ENCODE measurements at regions of chr1 and their contacts with region 1.

Region 1: DNA sequence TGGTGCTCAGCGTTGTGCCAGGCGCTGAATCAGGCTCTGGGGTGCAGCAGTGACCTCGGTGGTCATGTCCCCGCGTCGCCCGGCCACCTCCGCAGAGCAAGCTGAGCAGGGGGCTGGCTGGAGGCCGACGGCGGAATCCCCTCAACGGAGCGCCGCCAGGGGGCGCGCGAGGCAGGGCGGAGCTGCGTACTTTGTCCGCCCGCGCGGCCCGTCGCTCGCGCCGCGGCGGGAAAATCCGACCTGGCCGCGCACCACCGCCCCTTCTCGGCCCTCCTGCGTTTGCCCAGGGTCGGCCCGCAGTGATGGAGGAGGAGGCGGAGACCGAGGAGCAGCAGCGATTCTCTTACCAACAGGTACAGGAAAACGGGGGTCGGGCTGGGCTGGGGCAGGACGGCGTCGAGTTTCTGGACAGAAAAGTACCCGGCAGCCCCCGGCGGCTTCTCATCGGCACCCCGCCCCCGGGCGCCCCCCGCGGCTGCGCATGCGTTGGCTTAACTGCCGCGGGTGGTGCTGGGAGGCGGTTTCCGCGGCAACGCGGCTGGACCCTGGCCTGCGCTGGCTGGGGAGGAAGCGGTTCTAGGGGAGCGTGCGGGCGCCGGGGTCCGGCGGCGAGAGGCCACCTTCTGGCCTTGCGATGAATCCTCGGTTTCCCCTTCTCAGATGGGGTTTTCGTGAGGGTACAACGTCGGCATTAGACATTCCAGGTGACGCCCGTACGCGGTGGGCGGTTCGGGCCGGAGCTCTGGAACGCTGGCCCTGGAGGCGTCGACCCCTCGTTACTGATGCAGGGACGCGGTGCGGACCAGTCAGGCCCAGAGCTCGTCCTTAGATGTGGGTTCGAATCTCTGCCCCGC is at the start of gene CENPS:
- DNase-seq: peak; percentile 92
- H3K4me3 ChIP-seq: peak within 1 kb of the TSS; percentile 35 to 67 (median 55)
- H3K27ac ChIP-seq: peak within 1 kb of the TSS; percentile 42
- H3K4me1 ChIP-seq: peaks cover 14% of the 10 kb centered on the region
- H3K27me3 ChIP-seq: no peaks in the 10 kb centered on the region
- CTCF ChIP-seq: peak; percentile 94 to 97
- POLR2A ChIP-seq: peak; percentile 73
- total RNA-seq, gene CENPS: 16.2 and 17.0 TPM in 2 replicates

Region 2: GRCh38 chr1:9874959-9875635 is 555.3 kb before region 1 on chr1:
- CTCF ChIA-PET with region 1: no interaction called
- POLR2A ChIA-PET with region 1: no interaction called
- dilution Hi-C with region 1: no loop called
- intact Hi-C with region 1: loop called (anchors 1 kb)
- DNase-seq: peak; percentile 71
- H3K4me3 ChIP-seq: no peak overlapping the region
- H3K27ac ChIP-seq: no peak overlapping the region
- H3K4me1 ChIP-seq: no peaks in the 10 kb centered on the region
- H3K27me3 ChIP-seq: no peaks in the 10 kb centered on the region
- CTCF ChIP-seq: peak; percentile 85 to 92
- POLR2A ChIP-seq: no peak

Region 3: GRCh38 chr1:10032590-10033358 is 397.7 kb before region 1 on chr1 and contains the start of gene UBE4B:
- CTCF ChIA-PET with region 1: no interaction called
- POLR2A ChIA-PET with region 1: no interaction called
- dilution Hi-C with region 1: no loop called
- intact Hi-C with region 1: loop called (anchors 2 kb)
- DNase-seq: peak; percentile 99
- H3K4me3 ChIP-seq: peak within 1 kb of the TSS; percentile 55 to 85 (median 72)
- H3K27ac ChIP-seq: peak within 1 kb of the TSS; percentile 74
- H3K4me1 ChIP-seq: peaks cover 14% of the 10 kb centered on the region
- H3K27me3 ChIP-seq: no peaks in the 10 kb centered on the region
- CTCF ChIP-seq: peak; percentile 93 to 95
- POLR2A ChIP-seq: peak; percentile 34
- total RNA-seq, gene UBE4B: 54.5 and 56.7 TPM in 2 replicates

Region 4: GRCh38 chr1:10378081-10378841 is 52.2 kb before region 1 on chr1:
- CTCF ChIA-PET with region 1: interaction called, 58 read pairs
- POLR2A ChIA-PET with region 1: interaction called, 6 read pairs
- dilution Hi-C with region 1: no loop called
- intact Hi-C with region 1: loop called (anchors 1 kb)
- DNase-seq: peak; percentile 44
- H3K4me3 ChIP-seq: no peak overlapping the region
- H3K27ac ChIP-seq: peak overlapping the region; percentile 51
- H3K4me1 ChIP-seq: peaks cover 3% of the 10 kb centered on the region
- H3K27me3 ChIP-seq: no peaks in the 10 kb centered on the region
- CTCF ChIP-seq: no peak
- POLR2A ChIP-seq: no peak

Region 5: GRCh38 chr1:10398734-10399623 is 31.5 kb before region 1 on chr1 and contains the start of gene PGD:
- CTCF ChIA-PET with region 1: interaction called, 5 read pairs
- POLR2A ChIA-PET with region 1: interaction called, 3 read pairs
- dilution Hi-C with region 1: no loop called
- intact Hi-C with region 1: loop called (anchors 1 kb)
- DNase-seq: peak; percentile 98
- H3K4me3 ChIP-seq: peak within 1 kb of the TSS; percentile 67 to 96 (median 95)
- H3K27ac ChIP-seq: peak within 1 kb of the TSS; percentile 76
- H3K4me1 ChIP-seq: peaks cover 35% of the 10 kb centered on the region
- H3K27me3 ChIP-seq: no peaks in the 10 kb centered on the region
- CTCF ChIP-seq: no peak
- POLR2A ChIP-seq: peak; percentile 87
- total RNA-seq, gene PGD: 303 and 307 TPM in 2 replicates

Region 6: DNA sequence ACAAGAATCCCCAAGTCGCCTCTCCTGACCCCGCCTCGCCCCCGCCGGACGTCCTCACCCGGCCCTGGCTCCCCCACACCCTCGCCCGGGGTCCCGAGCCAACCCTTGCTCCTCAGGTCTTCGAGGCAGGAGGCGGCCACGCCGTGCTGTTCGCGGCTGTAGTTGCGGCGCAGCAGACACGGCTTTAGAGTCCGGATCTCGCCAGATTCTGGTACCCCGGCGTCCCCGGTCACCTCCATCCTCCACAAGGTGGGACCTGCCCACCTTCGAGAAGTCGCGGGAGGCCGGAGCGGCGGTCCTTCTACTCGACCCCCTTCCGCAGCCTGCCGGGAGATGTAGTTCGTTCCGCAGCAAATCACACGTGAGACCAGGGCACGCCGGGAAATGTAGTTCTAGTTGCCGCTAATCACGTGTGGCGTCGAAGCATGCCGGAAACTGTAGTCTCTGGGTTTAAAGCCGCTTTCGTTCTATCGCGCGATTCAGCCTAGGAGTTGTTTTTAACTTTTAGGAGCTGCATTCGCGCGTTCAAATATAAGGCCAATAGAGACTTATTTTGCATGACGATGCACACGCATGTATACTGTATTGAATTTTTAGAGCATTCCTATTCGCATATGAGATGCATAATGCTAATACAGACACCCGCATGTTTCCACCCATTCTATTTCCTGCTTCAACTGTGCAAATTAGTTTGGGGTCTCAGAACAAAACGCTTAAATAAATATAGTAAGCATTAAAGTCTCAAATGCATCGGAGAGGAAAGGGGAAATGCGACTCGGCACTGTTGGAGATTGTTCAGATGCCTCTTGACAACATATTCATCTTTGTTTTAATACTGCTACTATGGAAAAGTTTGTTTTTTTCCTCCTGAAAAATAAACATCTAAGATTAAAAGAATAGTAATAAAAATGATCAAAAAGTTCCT is 42.0 kb after region 1 on chr1 and contains the start of gene DFFA:
- CTCF ChIA-PET with region 1: interaction called, 6 read pairs
- POLR2A ChIA-PET with region 1: interaction called, 3 read pairs
- dilution Hi-C with region 1: no loop called
- intact Hi-C with region 1: loop called (anchors 1 kb)
- DNase-seq: peak; percentile 97
- H3K4me3 ChIP-seq: peak within 1 kb of the TSS; percentile 39 to 81 (median 66)
- H3K27ac ChIP-seq: peak within 1 kb of the TSS; percentile 25
- H3K4me1 ChIP-seq: peaks cover 8% of the 10 kb centered on the region
- H3K27me3 ChIP-seq: no peaks in the 10 kb centered on the region
- CTCF ChIP-seq: no peak
- POLR2A ChIP-seq: peak; percentile 78
- total RNA-seq, gene DFFA: 44.5 and 45.9 TPM in 2 replicates

Region 7: GRCh38 chr1:10867138-10867721 is 436.8 kb after region 1 on chr1:
- CTCF ChIA-PET with region 1: interaction called, 7 read pairs
- POLR2A ChIA-PET with region 1: no interaction called
- dilution Hi-C with region 1: no loop called
- intact Hi-C with region 1: loop called (anchors 1 kb)
- DNase-seq: peak; percentile 22
- H3K4me3 ChIP-seq: peak overlapping the region in 1 of 3 experiments; percentile 22
- H3K27ac ChIP-seq: no peak overlapping the region
- H3K4me1 ChIP-seq: no peaks in the 10 kb centered on the region
- H3K27me3 ChIP-seq: peaks cover 9 to 11% of the 10 kb centered on the region in 2 experiments
- CTCF ChIP-seq: peak; percentile 48 to 77
- POLR2A ChIP-seq: no peak